Right ventricle myocardium superior (tissue), 1 donor: ENCODE measurements at regions of chr9 and their contacts with region 1.

Region 1: GRCh38 chr9:16434526-16434925 is 435.9 kb downstream of the BNC2 start:
- DNase-seq: no peak
- ATAC-seq: no peak

Region 2: GRCh38 chr9:16191691-16192402 is 242.7 kb before region 1 on chr9:
- intact Hi-C with region 1: loop called (anchors 10 kb)
- DNase-seq: peak; percentile 89
- ATAC-seq: peak; percentile 99

Region 3: DNA sequence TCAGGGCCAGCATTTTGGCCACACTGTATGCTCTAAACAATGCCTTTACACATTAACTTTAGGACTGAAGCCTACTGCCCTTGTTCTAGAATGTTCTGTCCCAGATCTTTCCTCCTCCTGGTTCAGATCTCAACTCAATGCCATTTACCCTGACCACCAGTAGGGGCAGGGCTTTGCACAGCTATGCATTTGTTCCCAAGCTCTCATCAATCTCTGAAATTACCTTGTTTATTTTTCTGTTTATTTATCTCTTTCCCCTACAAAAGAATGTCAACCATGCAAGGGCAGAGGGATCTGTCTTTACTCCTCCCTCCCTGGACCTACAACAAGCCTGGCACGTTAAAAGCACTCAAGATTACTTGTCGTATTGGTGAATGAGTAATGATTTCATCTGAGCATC is 176.9 kb before region 1 on chr9:
- intact Hi-C with region 1: no loop called
- DNase-seq: no peak
- ATAC-seq: no peak

Region 4: DNA sequence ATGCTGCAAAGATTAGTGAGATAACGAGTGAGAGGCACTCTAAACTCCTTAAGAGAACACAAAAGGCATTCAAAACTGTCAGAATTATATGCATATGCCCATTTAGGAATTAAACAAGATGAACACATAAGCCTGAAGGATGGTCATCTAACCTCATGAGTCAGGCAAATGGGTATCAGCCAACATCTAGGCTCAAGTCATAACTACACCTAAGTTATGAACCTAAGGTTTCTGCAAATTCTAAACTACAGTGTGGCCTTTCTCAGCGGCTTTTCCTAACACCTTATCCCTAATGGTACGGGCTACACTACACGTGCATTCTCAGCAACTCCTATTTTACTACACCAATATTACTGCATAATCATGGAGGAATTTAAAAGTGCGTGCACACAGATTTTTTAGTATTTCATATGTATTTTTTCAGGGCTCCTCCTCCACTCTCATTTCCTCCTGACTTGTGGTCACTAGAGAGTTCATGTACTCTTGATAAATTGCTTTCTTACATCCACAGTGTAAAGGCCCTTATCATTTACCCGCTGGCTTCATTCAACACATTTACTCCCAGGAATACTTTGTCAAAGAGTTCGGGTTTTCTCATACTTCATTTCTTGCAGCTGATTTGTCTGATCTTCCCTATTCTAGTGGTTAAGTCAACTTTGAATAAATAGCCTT is 119.5 kb after region 1 on chr9:
- intact Hi-C with region 1: no loop called
- DNase-seq: no peak
- ATAC-seq: no peak